Head of caudate nucleus (tissue), 42 donors: ENCODE measurements at regions of chr11 and their contacts with region 1.

Region 1: GRCh38 chr11:74398244-74399159 is at the start of gene PGM2L1:
- DNase-seq: peak; percentile 88 to 98 (median 95)

Region 2: GRCh38 chr11:74449369-74449931 is 50.9 kb after region 1 on chr11:
- intact Hi-C with region 1: loop called (anchors 5 kb)
- DNase-seq: peak in 28 of 42 donors; percentile 14 to 80 (median 53)